WTC11 (cell line): ENCODE measurements at regions of chr15 and their contacts with region 1.

Region 1: DNA sequence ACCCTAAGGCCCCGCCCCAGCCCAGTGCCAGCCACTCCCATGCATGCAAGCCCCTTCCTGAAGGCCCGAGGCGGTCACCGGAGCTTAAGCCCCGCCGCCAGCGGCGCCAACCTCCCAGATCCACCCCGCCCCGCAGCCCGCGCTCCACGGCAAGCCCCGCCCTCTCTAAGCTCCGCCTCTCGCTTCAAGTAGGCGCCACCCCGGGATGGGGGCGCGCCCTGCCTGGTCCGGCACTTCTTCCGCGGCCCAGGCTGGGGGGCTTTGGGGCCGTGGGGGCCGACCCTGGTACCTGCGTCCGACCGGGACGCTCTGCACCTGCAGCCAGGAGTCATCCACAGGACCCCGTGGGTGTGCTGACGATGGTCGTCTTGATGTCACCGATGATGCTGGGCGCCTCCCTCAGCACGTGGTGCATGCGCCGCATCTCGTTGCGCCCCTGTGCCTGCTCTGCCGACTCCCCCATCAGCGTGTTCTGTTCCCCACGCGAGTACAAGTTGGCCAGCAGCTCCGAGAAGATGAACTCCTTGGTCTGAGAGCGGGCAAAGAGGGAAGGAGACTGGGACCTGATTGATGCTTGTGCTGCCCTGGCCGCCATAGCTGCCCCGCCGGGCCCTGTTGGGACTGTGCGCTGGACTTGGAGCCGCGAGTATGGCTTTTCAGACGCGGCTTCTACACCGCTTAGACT is 26.1 kb upstream of the CSPG4 start:
- DNase-seq: peak; percentile 98
- ATAC-seq: peak; percentile 98
- H3K4me3 Mint-ChIP-seq: peak overlapping the region; percentile 93
- H3K27ac Mint-ChIP-seq: no peak overlapping the region
- H3K4me1 Mint-ChIP-seq: peaks cover 28% of the 10 kb centered on the region
- H3K27me3 Mint-ChIP-seq: peaks cover 40% of the 10 kb centered on the region
- CTCF ChIP-seq: no peak

Region 2: GRCh38 chr15:75360391-75360790 is 378.4 kb before region 1 on chr15:
- CTCF ChIA-PET with region 1: no interaction called
- POLR2A ChIA-PET with region 1: no interaction called
- DNase-seq: no peak
- ATAC-seq: no peak
- H3K4me3 Mint-ChIP-seq: no peak overlapping the region
- H3K27ac Mint-ChIP-seq: no peak overlapping the region
- H3K4me1 Mint-ChIP-seq: no peaks in the 10 kb centered on the region
- H3K27me3 Mint-ChIP-seq: no peaks in the 10 kb centered on the region
- CTCF ChIP-seq: no peak

Region 3: DNA sequence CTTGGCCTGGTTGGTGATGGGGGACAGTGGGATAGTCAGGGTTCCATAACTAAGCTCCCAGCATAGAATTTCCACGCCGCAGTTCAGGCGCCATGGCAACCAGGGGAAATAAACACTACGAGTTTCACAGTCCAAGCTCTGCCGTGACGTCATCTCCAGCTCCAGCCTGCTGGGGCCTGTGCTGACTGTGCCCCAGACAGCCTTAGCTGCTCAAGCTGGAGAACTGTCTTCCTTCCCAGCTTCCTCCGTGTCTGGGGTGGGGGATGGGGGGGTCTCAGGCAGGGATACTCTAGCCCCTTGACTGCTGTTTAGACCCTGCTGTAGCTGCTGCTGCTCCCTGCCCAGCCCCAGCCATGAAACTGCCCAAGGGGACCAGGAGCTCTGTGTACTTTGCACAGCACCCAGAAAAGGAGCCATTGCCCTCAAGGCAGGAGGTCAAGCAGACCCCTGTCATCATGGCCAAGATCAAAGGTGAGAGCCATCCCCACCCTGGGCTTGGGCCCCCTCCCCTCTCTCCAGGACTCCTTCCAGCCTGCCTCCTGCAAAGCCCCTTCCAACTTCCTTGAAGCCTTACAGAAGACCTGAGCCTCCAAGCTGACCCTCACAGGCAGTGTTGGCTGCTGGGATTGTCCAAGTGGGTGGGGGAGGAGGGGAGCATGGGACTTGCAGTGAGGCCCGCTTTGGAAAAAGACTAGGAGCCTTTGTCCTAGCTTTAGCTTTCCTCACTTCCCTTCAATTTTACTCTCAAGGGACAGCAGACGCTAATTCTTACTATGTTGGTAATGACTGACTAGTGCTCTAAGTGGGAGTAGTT is 14.7 kb before region 1 on chr15:
- CTCF ChIA-PET with region 1: interaction called, 12 read pairs
- POLR2A ChIA-PET with region 1: interaction called, 3 read pairs
- DNase-seq: peak; percentile 35
- ATAC-seq: peak; percentile 9; the same call in 1 of the 2 replicates
- H3K4me3 Mint-ChIP-seq: no peak overlapping the region
- H3K27ac Mint-ChIP-seq: no peak overlapping the region
- H3K4me1 Mint-ChIP-seq: no peaks in the 10 kb centered on the region; the same call in 1 of the 2 replicates
- H3K27me3 Mint-ChIP-seq: peaks cover 50% of the 10 kb centered on the region
- CTCF ChIP-seq: no peak